Naive thymus-derived CD4-positive, alpha-beta T cell (primary cell): ENCODE measurements at regions of chr19 and their contacts with region 1.

Region 1: DNA sequence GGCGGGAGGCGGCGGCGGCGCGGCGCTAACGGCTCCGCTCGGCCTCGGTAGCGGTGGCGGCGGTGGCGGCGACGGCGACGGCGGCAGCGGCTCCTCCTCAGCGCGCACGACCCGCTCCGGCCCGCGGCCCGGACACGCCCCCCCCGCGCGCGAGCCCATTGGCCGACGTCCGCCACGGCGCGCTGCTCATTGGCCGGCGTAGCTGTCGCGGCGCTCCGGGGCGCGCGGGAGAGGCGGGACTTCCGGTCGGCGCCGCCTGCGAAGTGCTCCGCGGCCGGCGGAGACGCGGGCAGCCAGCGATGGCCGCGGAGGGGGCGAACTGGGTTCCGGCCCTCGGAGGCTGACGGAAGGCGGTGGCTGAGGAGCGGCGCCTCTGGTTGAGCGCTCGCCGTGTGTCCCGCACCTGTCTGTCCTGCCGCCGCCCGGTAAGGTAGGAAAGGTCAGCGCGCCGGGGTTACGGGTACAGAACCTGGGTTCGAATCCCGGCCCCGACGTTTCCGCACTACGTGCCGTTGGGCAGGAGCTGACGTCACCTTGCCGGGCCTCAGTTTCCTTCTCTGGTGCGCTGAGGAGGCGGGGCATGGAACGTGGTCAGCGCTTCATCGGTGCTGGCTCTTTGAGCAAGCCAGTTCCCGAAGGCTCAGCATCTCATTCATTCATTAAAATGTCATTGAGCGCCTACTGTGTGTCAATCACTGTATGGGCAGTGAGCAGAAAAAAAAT is at the start of gene ELAVL1:
- DNase-seq: peak; percentile 80 to 96 (median 88)
- ATAC-seq: peak; percentile 96
- H3K4me3 ChIP-seq: peak within 1 kb of the TSS; percentile 86
- H3K4me3 Mint-ChIP-seq: peak within 1 kb of the TSS; percentile 88 to 97 (median 92)
- H3K27ac ChIP-seq: peak within 1 kb of the TSS; percentile 93
- H3K27ac Mint-ChIP-seq: peak within 1 kb of the TSS; percentile 78 to 94 (median 90)
- H3K4me1 ChIP-seq: peaks cover 20 to 25% of the 10 kb centered on the region in 2 donors
- H3K4me1 Mint-ChIP-seq: peaks cover 30 to 43% (median 37%) of the 10 kb centered on the region in 7 donors
- H3K27me3 ChIP-seq: no peaks in the 10 kb centered on the region
- H3K27me3 Mint-ChIP-seq: no peaks in the 10 kb centered on the region
- total RNA-seq, gene ELAVL1: 32.4 to 117 (median 49.6) TPM

Region 2: GRCh38 chr19:7629347-7630054 is 376.2 kb before region 1 on chr19 and contains the starts of genes PET100 and XAB2:
- CTCF ChIA-PET with region 1: no interaction called
- POLR2A ChIA-PET with region 1: no interaction called
- intact Hi-C with region 1: loop called in 1 of 2 experiments (anchors 5 kb)
- DNase-seq: peak; percentile 81 to 97 (median 95)
- ATAC-seq: peak; percentile 97
- H3K4me3 ChIP-seq: peak within 1 kb of the TSS; percentile 89
- H3K4me3 Mint-ChIP-seq: peak within 1 kb of the TSS; percentile 87 to 100 (median 98)
- H3K27ac ChIP-seq: peak within 1 kb of the TSS; percentile 92
- H3K27ac Mint-ChIP-seq: peak within 1 kb of the TSS; percentile 96 to 100 (median 99)
- H3K4me1 ChIP-seq: peaks cover 19 to 21% of the 10 kb centered on the region in 2 donors
- H3K4me1 Mint-ChIP-seq: peaks cover 25 to 57% (median 38%) of the 10 kb centered on the region in 7 donors
- H3K27me3 ChIP-seq: no peaks in the 10 kb centered on the region
- H3K27me3 Mint-ChIP-seq: no peaks in the 10 kb centered on the region
- total RNA-seq, gene PET100: 112 to 134 (median 117) TPM
- total RNA-seq, gene XAB2: 49.3 to 79.8 (median 76.4) TPM

Region 3: DNA sequence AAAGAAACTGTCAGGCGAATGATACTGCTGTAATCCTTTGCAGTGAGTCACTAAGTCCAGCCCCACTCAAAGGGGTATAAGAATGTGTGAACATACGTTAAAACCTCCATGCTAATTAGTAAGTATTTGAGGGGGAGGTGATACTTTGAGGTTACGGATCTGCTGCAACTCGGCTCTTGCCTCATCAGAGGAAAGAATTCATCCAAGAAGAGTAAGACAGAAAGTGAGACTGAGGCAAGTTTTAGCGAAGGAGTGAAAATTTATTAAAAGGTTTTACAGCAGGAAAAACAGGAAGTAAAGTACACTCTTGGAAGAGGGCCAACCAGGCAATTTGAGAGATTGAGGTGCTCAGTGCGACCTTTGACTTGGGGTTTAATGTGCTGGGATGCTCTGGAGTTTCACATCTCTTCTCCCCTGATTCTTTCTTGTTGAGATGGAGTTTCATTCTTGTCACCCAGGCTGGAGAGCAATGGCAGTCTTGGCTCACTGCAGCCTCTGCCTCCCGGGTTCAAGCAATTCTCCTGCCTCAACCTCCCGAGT is 232.9 kb before region 1 on chr19:
- CTCF ChIA-PET with region 1: no interaction called
- POLR2A ChIA-PET with region 1: no interaction called
- intact Hi-C with region 1: no loop called
- DNase-seq: peak in 3 of 9 donors; percentile 8 to 19 (median 15)
- ATAC-seq: peak; percentile 81
- H3K4me3 ChIP-seq: peak overlapping the region; percentile 13
- H3K4me3 Mint-ChIP-seq: peak overlapping the region; percentile 16 to 74 (median 54)
- H3K27ac ChIP-seq: no peak overlapping the region
- H3K27ac Mint-ChIP-seq: peak overlapping the region; percentile 10 to 79 (median 64)
- H3K4me1 ChIP-seq: peaks cover 9 to 11% of the 10 kb centered on the region in 2 donors
- H3K4me1 Mint-ChIP-seq: peaks cover 11 to 26% (median 17%) of the 10 kb centered on the region in 7 donors
- H3K27me3 ChIP-seq: no peaks in the 10 kb centered on the region
- H3K27me3 Mint-ChIP-seq: peaks cover 0 to 8% (median 0%) of the 10 kb centered on the region in 5 donors

Region 4: DNA sequence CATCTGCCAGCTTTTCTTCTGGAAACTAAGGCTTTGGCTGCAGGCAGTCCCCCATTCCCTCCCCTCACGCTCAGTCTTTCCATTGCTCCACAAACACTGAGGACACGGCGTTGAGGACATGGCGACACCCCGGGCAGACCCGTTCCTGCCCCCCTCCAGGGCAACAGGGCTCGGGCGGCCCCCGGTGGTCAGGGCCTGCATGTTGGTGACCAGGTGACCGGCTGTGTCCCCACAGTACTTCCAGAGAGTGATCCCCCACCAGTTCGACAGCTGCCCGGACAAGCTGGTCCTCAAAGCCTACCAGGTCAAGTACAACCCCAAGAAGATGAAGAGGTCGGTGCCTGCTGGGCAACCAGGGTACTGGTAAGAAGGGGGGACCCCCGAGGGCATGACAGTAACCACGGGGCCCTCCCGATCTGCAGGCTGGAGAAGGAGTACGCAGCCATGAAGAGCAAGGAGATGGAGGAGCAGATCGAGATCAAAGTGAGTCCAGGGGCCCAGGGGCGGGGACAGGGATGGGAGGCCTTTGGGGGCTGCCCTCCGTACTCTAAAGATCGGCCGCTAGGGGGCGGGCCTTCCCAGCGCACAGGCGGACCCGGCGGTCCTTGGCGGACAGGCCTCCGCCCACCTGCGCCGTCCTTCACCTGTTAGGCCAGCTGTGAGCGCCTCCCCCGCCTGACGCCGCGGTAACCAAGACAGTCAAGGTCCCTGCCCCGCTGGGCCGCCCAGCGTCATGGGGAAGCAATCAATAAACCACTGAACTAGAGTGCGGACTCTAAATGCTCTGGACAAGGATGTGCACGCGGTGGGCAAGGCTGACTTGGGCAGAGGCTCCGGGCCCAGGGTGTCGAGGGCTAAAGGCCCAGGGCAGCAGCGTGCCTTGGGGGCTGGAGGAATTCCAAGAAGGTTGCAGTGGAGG is 152.6 kb before region 1 on chr19:
- CTCF ChIA-PET with region 1: no interaction called
- POLR2A ChIA-PET with region 1: no interaction called
- intact Hi-C with region 1: loop called in 1 of 2 experiments (anchors 1 kb)
- DNase-seq: peak; percentile 38 to 76 (median 51)
- ATAC-seq: peak; percentile 87
- H3K4me3 ChIP-seq: no peak overlapping the region
- H3K4me3 Mint-ChIP-seq: peak overlapping the region in 1 of 10 donors; percentile 33
- H3K27ac ChIP-seq: no peak overlapping the region
- H3K27ac Mint-ChIP-seq: peak overlapping the region in 1 of 9 donors; percentile 52
- H3K4me1 ChIP-seq: peaks cover 3 to 7% of the 10 kb centered on the region in 2 donors
- H3K4me1 Mint-ChIP-seq: peaks cover 0 to 8% (median 5%) of the 10 kb centered on the region in 7 donors
- H3K27me3 ChIP-seq: no peaks in the 10 kb centered on the region
- H3K27me3 Mint-ChIP-seq: no peaks in the 10 kb centered on the region

Region 5: DNA sequence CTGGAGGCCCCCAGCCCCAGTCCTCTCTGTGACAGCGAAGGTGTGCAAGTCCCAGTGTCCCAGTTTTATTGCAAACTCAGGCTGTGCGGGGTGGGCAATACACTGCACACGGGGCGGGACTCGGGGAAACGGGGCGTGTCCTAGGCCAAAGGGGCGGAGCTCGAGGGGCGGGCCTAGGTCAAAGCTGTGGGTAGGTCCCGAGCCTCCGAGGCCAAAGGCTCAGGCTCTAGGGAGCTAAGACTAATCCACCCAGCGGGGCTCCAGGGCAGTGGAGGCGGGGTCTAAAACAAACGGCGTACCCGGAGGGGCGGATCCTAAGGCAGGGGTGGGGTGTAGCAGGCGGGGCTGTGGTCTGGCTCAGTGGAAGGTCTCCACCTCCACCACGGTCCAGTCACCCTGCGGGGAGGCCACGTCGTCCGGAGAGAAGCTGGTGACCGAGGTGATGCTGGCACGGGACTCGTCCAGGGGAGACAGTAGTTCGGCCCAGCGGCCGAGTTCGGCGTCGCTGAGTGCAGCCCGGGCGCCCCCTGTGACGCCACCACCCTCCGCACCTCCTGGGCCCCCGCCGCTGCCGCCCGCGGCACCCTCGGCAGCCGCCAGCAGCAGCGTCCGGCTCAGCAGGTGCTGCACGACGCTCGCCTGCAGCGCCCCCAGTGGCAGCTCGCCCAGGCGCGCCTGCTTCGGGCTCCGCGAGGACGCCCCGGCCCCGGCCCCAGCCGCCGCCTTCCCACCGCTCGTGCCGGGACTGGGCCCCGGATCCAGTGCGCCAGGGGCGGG is 136.8 kb before region 1 on chr19:
- CTCF ChIA-PET with region 1: no interaction called
- POLR2A ChIA-PET with region 1: no interaction called
- intact Hi-C with region 1: loop called in 1 of 2 experiments (anchors 5 kb)
- DNase-seq: peak in 8 of 9 donors; percentile 51 to 95 (median 89)
- ATAC-seq: peak; percentile 83
- H3K4me3 ChIP-seq: peak overlapping the region; percentile 74
- H3K4me3 Mint-ChIP-seq: peak overlapping the region; percentile 69 to 87 (median 81)
- H3K27ac ChIP-seq: peak overlapping the region; percentile 69
- H3K27ac Mint-ChIP-seq: peak overlapping the region; percentile 34 to 90 (median 58)
- H3K4me1 ChIP-seq: peaks cover 12 to 19% of the 10 kb centered on the region in 2 donors
- H3K4me1 Mint-ChIP-seq: peaks cover 24 to 39% (median 36%) of the 10 kb centered on the region in 7 donors
- H3K27me3 ChIP-seq: peaks cover 0 to 2% of the 10 kb centered on the region in 2 donors
- H3K27me3 Mint-ChIP-seq: peaks cover 0 to 62% (median 8%) of the 10 kb centered on the region in 5 donors

Region 6: GRCh38 chr19:7953060-7953459 is 52.6 kb before region 1 on chr19:
- CTCF ChIA-PET with region 1: no interaction called
- POLR2A ChIA-PET with region 1: no interaction called
- intact Hi-C with region 1: no loop called
- DNase-seq: no peak
- ATAC-seq: no peak
- H3K4me3 ChIP-seq: no peak overlapping the region
- H3K4me3 Mint-ChIP-seq: no peak overlapping the region
- H3K27ac ChIP-seq: no peak overlapping the region
- H3K27ac Mint-ChIP-seq: no peak overlapping the region
- H3K4me1 ChIP-seq: no peaks in the 10 kb centered on the region
- H3K4me1 Mint-ChIP-seq: peaks cover 0 to 5% (median 0%) of the 10 kb centered on the region in 7 donors
- H3K27me3 ChIP-seq: no peaks in the 10 kb centered on the region
- H3K27me3 Mint-ChIP-seq: no peaks in the 10 kb centered on the region

Region 7: DNA sequence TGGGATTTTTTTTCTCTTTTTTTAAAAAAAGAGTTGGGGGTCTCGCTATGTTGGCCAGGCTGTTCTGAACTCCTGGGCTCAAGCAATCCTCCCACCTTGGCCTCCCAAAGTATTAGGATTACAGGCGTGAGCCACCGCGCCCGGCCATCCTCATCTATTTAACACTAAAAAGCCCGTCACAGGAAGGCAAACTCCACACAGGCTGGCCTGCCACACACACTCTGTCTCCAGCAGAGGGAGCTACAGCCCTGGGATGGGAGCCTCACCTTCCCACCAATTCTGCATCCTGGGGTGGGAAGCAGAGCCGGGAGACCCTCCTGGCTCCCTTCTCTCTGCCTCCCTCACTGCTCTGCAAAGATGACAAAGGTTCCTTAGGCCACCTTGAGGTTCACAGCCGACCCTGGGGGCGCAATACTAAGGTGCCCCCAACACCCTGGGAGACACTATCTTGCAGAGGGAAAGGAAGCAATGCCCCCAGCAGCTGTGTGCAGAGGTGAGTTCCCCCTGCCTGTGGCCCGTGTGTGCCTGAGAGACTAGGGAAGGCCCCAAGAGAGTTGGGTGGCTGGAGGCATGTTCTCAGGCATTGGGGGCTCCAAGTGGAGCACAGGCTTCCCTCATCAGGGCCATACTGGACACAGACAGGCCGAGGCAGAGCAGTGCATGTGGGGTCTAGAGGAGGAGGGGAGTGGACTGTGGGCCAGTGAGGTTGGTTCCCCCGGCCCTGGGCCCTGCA is 34.8 kb before region 1 on chr19:
- CTCF ChIA-PET with region 1: no interaction called
- POLR2A ChIA-PET with region 1: no interaction called
- intact Hi-C with region 1: loop called in 1 of 2 experiments (anchors 1 kb)
- DNase-seq: peak in 2 of 9 donors; percentile 13 to 29
- ATAC-seq: peak; percentile 60
- H3K4me3 ChIP-seq: no peak overlapping the region
- H3K4me3 Mint-ChIP-seq: no peak overlapping the region
- H3K27ac ChIP-seq: no peak overlapping the region
- H3K27ac Mint-ChIP-seq: peak overlapping the region in 1 of 9 donors; percentile 32
- H3K4me1 ChIP-seq: no peaks in the 10 kb centered on the region
- H3K4me1 Mint-ChIP-seq: peaks cover 0 to 3% (median 0%) of the 10 kb centered on the region in 7 donors
- H3K27me3 ChIP-seq: no peaks in the 10 kb centered on the region
- H3K27me3 Mint-ChIP-seq: no peaks in the 10 kb centered on the region

Region 8: GRCh38 chr19:8050274-8051096 is 44.8 kb after region 1 on chr19:
- CTCF ChIA-PET with region 1: interaction called, 3 read pairs
- POLR2A ChIA-PET with region 1: interaction called, 3 read pairs
- intact Hi-C with region 1: loop called (anchors 5 kb)
- DNase-seq: peak; percentile 65 to 88 (median 79)
- ATAC-seq: peak; percentile 99
- H3K4me3 ChIP-seq: peak overlapping the region; percentile 54
- H3K4me3 Mint-ChIP-seq: peak overlapping the region; percentile 59 to 85 (median 80)
- H3K27ac ChIP-seq: peak overlapping the region; percentile 47
- H3K27ac Mint-ChIP-seq: peak overlapping the region in 6 of 9 donors; percentile 14 to 75 (median 68)
- H3K4me1 ChIP-seq: peaks cover 0 to 8% of the 10 kb centered on the region in 2 donors
- H3K4me1 Mint-ChIP-seq: peaks cover 7 to 24% (median 13%) of the 10 kb centered on the region in 7 donors
- H3K27me3 ChIP-seq: no peaks in the 10 kb centered on the region
- H3K27me3 Mint-ChIP-seq: peaks cover 0 to 17% (median 0%) of the 10 kb centered on the region in 5 donors

Region 9: DNA sequence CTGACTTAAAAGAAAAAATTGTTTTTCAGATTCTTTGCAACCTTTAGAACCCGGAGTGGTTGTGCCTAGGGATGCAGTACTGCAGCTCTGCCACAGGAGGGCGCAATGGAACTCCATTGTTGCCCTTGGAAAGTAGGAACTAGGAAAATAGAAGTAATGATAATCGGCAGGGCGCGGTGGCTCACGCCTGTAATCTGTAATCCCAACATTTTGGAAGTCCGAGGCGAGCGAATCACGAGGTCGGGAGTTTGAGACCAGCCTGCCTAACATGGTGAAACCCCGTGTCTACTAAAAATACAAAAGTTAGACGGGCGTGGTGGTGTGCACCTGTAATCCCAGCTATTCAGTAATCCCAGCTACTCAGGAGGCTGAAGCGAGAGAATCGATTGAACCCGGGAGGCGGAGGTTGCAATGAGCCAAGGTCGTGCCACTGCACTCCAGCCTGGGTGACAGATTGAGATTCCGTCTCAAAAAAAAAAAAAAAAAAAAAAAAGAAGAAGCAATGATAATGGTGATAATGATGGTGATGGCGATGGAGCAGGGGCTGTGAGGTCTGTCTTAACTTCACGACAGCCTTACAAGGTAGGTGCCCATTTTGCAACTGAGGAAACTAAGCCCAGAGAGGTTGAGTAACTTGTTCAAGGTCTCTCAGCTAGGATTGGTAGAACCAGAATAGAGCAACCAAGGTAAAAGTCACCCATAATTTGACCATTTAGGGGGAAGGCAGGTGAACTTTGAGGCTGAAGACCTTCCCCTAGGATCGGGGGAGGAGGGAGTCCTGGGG is 610.3 kb after region 1 on chr19:
- CTCF ChIA-PET with region 1: no interaction called
- POLR2A ChIA-PET with region 1: no interaction called
- intact Hi-C with region 1: no loop called
- DNase-seq: peak; percentile 37 to 70 (median 54)
- ATAC-seq: peak; percentile 83
- H3K4me3 ChIP-seq: no peak overlapping the region
- H3K4me3 Mint-ChIP-seq: peak overlapping the region in 5 of 10 donors; percentile 2 to 74 (median 30)
- H3K27ac ChIP-seq: no peak overlapping the region
- H3K27ac Mint-ChIP-seq: peak overlapping the region in 6 of 9 donors; percentile 19 to 72 (median 48)
- H3K4me1 ChIP-seq: peaks cover 7 to 11% of the 10 kb centered on the region in 2 donors
- H3K4me1 Mint-ChIP-seq: peaks cover 8 to 31% (median 25%) of the 10 kb centered on the region in 7 donors
- H3K27me3 ChIP-seq: no peaks in the 10 kb centered on the region
- H3K27me3 Mint-ChIP-seq: peaks cover 0 to 10% (median 4%) of the 10 kb centered on the region in 5 donors